HEK293 (cell line): ENCODE measurements at regions of chr10 and their contacts with region 1.

Region 1: GRCh38 chr10:62816331-62817120 is at the start of gene EGR2:
- H3K4me3 ChIP-seq: peak within 1 kb of the TSS; percentile 70
- H3K27ac ChIP-seq: peak within 1 kb of the TSS; percentile 91
- H3K4me1 ChIP-seq: no peaks in the 10 kb centered on the region; the same call in 1 of the 2 replicates
- CTCF ChIP-seq: no peak

Region 2: DNA sequence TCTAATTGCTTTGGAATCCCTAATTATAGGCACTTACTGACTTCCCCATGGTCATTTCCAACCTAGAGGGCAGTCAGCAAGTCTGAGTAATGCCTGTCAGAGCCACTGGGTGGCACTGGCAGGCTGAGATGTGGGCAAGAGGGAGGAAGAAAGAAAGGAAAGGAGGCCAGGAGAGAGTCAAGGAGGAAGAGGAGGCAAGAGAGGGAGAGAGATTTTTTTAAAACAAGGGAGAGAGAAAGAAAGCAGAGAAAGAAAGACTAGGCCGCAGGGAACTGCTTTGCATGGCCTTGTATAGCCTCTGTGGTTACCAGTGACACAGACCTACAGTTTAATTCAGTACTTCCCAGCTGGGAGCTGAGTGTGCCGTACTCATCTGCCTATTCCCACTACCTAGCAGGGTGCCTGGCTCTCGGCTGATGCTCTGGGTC is 222.4 kb before region 1 on chr10:
- CTCF ChIA-PET with region 1: interaction called, 10 read pairs
- POLR2A ChIA-PET with region 1: no interaction called
- H3K4me3 ChIP-seq: no peak overlapping the region
- H3K27ac ChIP-seq: no peak overlapping the region
- H3K4me1 ChIP-seq: no peaks in the 10 kb centered on the region
- CTCF ChIP-seq: peak; percentile 83

Region 3: DNA sequence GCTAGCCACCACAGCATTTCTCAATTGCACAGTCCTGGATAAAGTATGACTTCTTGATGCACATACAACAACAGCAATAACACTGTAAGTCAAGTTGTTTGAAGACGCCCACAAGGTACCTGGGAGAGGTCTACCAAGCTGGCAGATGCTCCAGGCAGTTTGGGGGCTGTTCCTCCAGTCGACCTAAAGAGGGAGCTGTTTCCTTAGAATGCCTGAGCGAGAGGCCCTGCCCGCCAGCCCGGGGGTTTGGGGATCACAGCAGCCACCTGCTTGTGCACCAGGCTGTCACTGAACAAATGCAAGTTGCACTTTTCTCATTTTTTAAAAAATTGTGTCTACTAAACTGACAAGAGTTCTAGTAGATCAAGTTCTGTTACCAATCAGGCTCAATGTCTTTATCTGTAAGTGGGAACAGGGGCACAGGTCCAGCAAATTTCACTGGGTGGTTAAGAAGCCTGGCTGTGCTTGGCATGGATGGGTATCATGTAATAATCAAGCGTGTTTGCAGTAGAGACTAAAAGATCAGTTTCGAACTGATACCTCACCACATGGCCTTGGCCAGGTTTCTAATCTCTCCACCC is 205.8 kb before region 1 on chr10:
- CTCF ChIA-PET with region 1: interaction called, 25 read pairs
- POLR2A ChIA-PET with region 1: interaction called, 4 read pairs
- H3K4me3 ChIP-seq: no peak overlapping the region
- H3K27ac ChIP-seq: no peak overlapping the region
- H3K4me1 ChIP-seq: no peaks in the 10 kb centered on the region
- CTCF ChIP-seq: no peak

Region 4: DNA sequence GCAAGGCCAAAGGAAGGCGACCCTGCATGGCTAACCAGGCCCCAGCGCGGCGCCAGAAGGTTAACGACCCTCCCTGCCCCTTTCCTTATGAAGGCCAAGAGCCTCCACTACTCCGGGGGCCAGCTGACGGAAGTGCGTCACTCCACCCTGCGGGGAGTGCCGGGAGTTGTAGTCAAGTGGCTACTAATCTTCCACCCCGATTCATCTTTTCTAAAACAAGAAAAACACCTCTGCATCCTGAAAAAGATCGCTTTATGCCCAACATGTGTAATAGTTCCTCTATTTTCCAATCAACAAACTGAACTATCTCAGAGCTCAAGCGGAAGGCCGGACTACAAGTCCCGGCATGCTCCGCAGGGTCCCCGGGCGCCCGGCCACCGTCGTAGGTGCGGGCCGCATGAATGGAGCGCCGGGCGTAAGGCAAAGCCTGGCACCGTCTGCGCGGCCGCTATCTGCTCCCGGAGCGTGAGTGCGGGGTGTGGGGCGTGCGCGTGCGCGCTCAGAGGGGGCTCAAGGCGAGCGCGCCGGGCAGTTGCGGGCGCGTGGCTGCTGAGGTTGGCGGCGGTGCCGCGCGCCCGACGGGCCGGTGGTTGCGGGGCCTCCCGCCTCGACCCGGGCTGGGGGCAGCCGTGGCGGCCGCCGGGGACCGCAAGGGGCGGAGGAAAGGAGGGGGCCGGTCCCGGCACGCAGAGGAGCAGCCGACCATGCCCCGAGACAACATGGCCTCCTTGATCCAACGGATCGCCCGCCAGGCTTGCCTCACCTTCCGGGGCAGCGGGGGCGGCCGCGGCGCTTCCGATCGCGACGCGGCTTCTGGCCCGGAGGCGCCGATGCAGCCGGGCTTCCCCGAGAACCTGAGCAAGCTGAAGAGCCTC is 11.9 kb before region 1 on chr10 and contains the start of gene ADO:
- CTCF ChIA-PET with region 1: interaction called, 4 read pairs
- POLR2A ChIA-PET with region 1: interaction called, 50 read pairs
- H3K4me3 ChIP-seq: peak within 1 kb of the TSS; percentile 83
- H3K27ac ChIP-seq: peak within 1 kb of the TSS; percentile 86
- H3K4me1 ChIP-seq: peaks cover 5% of the 10 kb centered on the region; the same call in 1 of the 2 replicates
- CTCF ChIP-seq: no peak; the same call in 1 of the 2 replicates

Region 5: DNA sequence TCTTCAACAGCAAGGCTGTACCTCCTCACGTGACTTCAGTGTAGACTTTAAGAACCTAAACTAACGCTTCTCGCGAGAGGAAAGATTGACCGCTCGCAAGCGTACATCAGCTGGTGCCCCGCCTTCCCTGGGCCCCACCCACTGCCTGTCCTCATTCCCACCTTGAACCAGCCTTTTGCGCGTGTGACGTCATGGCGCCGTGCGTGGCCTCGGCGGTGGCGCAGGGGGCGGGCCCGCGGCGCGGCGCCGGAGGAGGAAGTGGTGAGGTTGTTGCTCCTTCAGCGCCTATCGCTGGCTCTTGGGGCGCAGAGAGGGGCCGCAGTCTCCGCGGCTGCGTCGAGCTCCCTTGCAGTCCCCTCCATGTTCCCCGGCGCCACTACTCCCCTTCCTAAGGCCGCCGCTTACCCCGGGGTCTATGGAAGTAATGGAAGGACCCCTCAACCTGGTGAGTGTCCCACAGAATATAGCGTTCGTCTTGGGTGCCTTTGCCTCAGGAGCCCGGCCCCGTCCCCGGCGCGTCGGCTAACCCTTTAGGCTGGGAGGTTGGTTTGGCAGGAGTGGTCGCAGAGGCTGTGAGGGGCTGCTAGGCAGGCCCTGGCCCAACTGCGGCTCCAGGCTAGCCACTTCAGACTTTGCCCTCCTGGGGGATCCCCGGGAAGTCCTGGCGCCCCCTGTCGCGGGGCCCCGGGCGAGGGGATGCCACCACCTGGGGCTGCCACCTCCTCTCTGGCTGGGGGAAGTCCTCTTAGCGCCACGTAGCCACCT is 316.7 kb after region 1 on chr10 and contains the start of gene NRBF2:
- CTCF ChIA-PET with region 1: interaction called, 3 read pairs
- POLR2A ChIA-PET with region 1: interaction called, 11 read pairs
- H3K4me3 ChIP-seq: peak within 1 kb of the TSS; percentile 83
- H3K27ac ChIP-seq: peak within 1 kb of the TSS; percentile 60
- H3K4me1 ChIP-seq: no peaks in the 10 kb centered on the region
- CTCF ChIP-seq: peak; percentile 90